ENCODE measurements at regions of chr6 and their contacts with region 1.

Region 1: DNA sequence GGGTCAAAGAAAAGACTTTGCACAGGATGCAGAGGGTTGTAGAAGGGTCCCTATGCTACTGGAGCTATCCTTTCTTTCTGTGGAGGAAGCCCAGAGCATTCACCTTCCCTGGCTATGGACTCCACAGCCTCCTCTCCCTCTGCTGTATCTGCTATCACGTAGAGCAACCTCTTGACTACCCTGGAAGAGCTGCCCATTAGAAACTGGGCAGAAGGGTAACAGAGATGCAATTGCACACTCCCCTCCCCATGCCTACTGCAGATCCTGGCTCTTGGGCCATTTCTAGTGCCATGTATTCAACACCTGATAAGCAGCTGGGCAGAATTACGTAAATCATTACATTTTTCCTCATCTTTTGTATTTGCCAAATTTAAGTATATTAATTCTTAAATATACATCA is 3.1 kb downstream of the KLHL31 start:
- DNase-seq: no peak
- ATAC-seq: no peak
- H3K4me3 ChIP-seq: no peak overlapping the region
- H3K4me3 Mint-ChIP-seq: no peak overlapping the region
- H3K27ac ChIP-seq: no peak overlapping the region
- H3K27ac Mint-ChIP-seq: no peak overlapping the region
- H3K4me1 ChIP-seq: no peaks in the 10 kb centered on the region
- H3K4me1 Mint-ChIP-seq: no peaks in the 10 kb centered on the region
- H3K27me3 ChIP-seq: peaks cover 0 to 8% (median 6%) of the 10 kb centered on the region in 4 experiments
- H3K27me3 Mint-ChIP-seq: peaks cover 47% of the 10 kb centered on the region
- CTCF ChIP-seq: no peak

Region 2: DNA sequence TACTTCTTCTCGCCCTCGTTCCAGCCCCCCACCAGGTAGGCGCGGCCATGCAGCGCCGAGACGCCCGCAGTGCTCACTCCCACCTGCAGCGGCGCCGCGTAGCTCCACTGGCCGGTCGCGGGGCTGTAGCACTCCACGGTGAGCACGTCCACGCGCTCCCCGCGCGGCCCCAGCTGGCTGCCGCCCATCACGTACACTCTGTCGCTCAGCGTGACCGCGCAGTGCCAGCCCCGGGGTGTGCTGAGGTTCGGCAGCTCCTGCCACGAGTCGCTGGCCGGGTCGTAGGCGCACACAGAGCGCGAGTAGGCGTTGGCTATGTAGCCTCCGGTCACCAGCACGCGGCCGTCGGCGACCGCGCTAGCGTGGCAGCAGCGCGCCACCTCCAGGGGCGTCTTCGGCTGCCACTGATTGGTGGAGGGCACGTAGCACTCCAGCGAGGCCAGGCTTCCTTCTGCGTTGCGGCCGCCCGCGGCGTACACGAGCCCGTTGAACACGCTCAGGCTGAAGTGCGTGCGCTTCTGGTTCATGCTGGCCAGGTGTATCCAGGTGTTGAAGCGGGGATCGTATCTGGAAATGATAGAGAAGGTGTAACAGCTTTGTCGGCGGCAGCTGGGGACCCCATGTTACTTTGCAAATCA is 10.6 kb before region 1 on chr6:
- CTCF ChIA-PET with region 1: interaction called, 10 read pairs
- POLR2A ChIA-PET with region 1: no interaction called
- intact Hi-C with region 1: no loop called
- DNase-seq: peak; percentile 87
- ATAC-seq: peak; percentile 83
- H3K4me3 ChIP-seq: peak overlapping the region; percentile 64 to 96 (median 79)
- H3K4me3 Mint-ChIP-seq: peak overlapping the region; percentile 96
- H3K27ac ChIP-seq: peak overlapping the region; percentile 9 to 51
- H3K27ac Mint-ChIP-seq: peak overlapping the region; percentile 90
- H3K4me1 ChIP-seq: peaks cover 20 to 26% of the 10 kb centered on the region in 2 donors
- H3K4me1 Mint-ChIP-seq: peaks cover 20% of the 10 kb centered on the region
- H3K27me3 ChIP-seq: peaks cover 0 to 6% (median 0%) of the 10 kb centered on the region in 4 experiments
- H3K27me3 Mint-ChIP-seq: no peaks in the 10 kb centered on the region
- CTCF ChIP-seq: peak; percentile 24

Region 3: GRCh38 chr6:54043360-54043759 is 380.9 kb after region 1 on chr6:
- CTCF ChIA-PET with region 1: no interaction called
- POLR2A ChIA-PET with region 1: no interaction called
- intact Hi-C with region 1: no loop called
- DNase-seq: no peak
- ATAC-seq: no peak
- H3K4me3 ChIP-seq: no peak overlapping the region
- H3K4me3 Mint-ChIP-seq: no peak overlapping the region
- H3K27ac ChIP-seq: no peak overlapping the region
- H3K27ac Mint-ChIP-seq: no peak overlapping the region
- H3K4me1 ChIP-seq: no peaks in the 10 kb centered on the region
- H3K4me1 Mint-ChIP-seq: no peaks in the 10 kb centered on the region
- H3K27me3 ChIP-seq: no peaks in the 10 kb centered on the region
- H3K27me3 Mint-ChIP-seq: peaks cover 8% of the 10 kb centered on the region
- CTCF ChIP-seq: no peak

Measured in B cell (primary cell).